Ascending aorta (tissue), 2 donors: ENCODE measurements at regions of chr18 and their contacts with region 1.

Region 1: GRCh38 chr18:48675352-48675761 is 136.5 kb downstream of the CTIF start:
- DNase-seq: peak; percentile 47 to 91
- H3K4me3 ChIP-seq: no peak overlapping the region
- H3K27ac ChIP-seq: peak overlapping the region in 1 of 2 donors; percentile 84
- H3K4me1 ChIP-seq: peaks cover 18 to 33% of the 10 kb centered on the region in 2 donors
- H3K27me3 ChIP-seq: no peaks in the 10 kb centered on the region
- CTCF ChIP-seq: peak; percentile 92 to 95 (median 94)

Region 2: DNA sequence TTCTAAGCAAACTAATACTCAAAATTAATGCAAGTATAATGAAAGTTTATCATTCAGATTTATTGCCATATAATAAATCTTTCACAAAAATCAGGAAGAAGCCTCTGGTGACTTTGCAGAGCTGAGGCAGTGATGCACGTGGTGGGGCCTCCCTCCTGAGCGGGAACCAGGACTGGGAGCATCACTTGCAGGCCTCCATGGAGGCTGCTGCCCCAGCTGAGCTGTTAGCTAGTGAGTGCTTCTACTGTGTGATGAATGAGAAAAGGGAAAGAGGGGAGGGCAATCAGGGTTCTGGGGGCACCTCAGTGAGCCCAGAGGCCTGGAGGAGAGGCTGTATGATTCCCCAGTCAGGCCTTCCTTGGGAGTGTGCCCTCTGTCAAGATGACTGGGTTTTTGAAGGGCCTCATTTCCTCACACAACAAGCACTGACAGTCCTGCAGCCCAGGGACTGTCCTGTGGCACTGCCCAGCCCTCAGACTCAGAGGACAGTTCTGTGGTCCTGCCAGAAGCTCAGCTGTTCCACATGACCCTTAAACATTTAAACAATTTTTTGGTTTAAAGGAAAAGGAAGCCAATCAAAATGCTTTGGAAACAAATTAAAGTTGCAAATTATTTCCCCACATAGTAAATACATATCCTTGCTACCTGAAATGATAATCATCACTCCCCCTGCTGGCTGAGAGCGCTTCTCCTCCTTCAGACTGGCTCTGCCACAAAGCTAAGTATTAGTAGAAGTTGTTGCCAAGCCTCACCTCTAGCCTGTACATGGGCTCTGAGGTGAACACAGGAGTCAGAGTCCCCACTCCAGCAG is 366.3 kb after region 1 on chr18:
- intact Hi-C with region 1: loop called (anchors 5 kb)
- DNase-seq: peak in 1 of 2 donors; percentile 82
- H3K4me3 ChIP-seq: no peak overlapping the region
- H3K27ac ChIP-seq: peak overlapping the region; percentile 13 to 63
- H3K4me1 ChIP-seq: no peaks in the 10 kb centered on the region
- H3K27me3 ChIP-seq: no peaks in the 10 kb centered on the region
- CTCF ChIP-seq: peak; percentile 38 to 70 (median 61)

Region 3: GRCh38 chr18:49178736-49179135 is 503.4 kb after region 1 on chr18:
- intact Hi-C with region 1: loop called (anchors 2 kb)
- DNase-seq: no peak
- H3K4me3 ChIP-seq: no peak overlapping the region
- H3K27ac ChIP-seq: no peak overlapping the region
- H3K4me1 ChIP-seq: peaks cover 0 to 4% of the 10 kb centered on the region in 2 donors
- H3K27me3 ChIP-seq: no peaks in the 10 kb centered on the region
- CTCF ChIP-seq: peak; percentile 42 to 68 (median 63)

Region 4: DNA sequence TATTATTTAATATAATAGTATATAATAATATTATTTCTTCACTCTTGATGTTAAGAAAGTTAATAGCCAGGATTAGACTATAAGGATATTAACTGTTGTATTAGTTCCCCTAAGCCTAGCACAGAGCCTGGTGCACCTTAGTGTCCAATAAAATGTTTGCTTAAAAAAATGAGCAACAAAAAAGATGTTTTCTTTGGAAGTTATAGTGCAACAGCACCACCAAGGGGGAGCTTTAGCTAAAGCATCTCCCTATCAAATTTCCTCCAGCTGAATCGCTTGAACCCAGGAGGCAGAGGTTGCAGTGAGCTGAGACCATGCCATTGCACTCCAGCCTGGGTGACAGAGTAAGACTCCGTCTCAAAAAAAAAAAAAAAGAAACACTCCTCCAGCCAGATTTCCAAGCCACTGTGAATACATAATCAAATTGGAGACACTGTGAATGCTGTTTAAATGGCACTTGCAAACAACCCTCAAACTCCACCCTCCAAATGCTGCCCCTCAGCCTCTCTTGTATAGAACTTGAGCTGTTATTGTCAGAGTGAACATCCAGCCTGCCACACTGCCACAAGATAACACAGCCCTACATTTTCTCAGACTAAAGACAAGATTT is 563.2 kb after region 1 on chr18:
- intact Hi-C with region 1: loop called (anchors 1 kb)
- DNase-seq: no peak
- H3K4me3 ChIP-seq: no peak overlapping the region
- H3K27ac ChIP-seq: no peak overlapping the region
- H3K4me1 ChIP-seq: no peaks in the 10 kb centered on the region
- H3K27me3 ChIP-seq: no peaks in the 10 kb centered on the region
- CTCF ChIP-seq: peak in 2 of 3 experiments; percentile 10 to 44

Region 5: GRCh38 chr18:49412679-49413078 is 737.3 kb after region 1 on chr18:
- intact Hi-C with region 1: loop called (anchors 2 kb)
- DNase-seq: no peak
- H3K4me3 ChIP-seq: no peak overlapping the region
- H3K27ac ChIP-seq: no peak overlapping the region
- H3K4me1 ChIP-seq: no peaks in the 10 kb centered on the region
- H3K27me3 ChIP-seq: no peaks in the 10 kb centered on the region
- CTCF ChIP-seq: no peak